Mammary epithelial cell (primary cell): ENCODE measurements at regions of chr3 and their contacts with region 1.

Region 1: GRCh38 chr3:58008140-58009025 is at the start of gene FLNB:
- DNase-seq: peak; percentile 66
- H3K4me3 ChIP-seq: peak within 1 kb of the TSS; percentile 66 to 81 (median 77)
- H3K27ac ChIP-seq: peak within 1 kb of the TSS; percentile 51
- H3K4me1 ChIP-seq: peaks cover 50% of the 10 kb centered on the region
- H3K27me3 ChIP-seq: no peaks in the 10 kb centered on the region
- CTCF ChIP-seq: peak; percentile 38 to 80
- total RNA-seq, gene FLNB: 930 to 1,038 TPM

Region 2: GRCh38 chr3:57864853-57865252 is 143.5 kb before region 1 on chr3:
- CTCF ChIA-PET with region 1: no interaction called
- dilution Hi-C with region 1: no loop called
- in situ Hi-C with region 1: no loop called
- intact Hi-C with region 1: loop called (anchors 2 kb)
- DNase-seq: no peak
- H3K4me3 ChIP-seq: no peak overlapping the region
- H3K27ac ChIP-seq: no peak overlapping the region
- H3K4me1 ChIP-seq: no peaks in the 10 kb centered on the region
- H3K27me3 ChIP-seq: no peaks in the 10 kb centered on the region
- CTCF ChIP-seq: peak; percentile 27 to 29

Region 3: GRCh38 chr3:57961828-57962447 is 46.4 kb before region 1 on chr3:
- CTCF ChIA-PET with region 1: no interaction called
- dilution Hi-C with region 1: no loop called
- in situ Hi-C with region 1: no loop called
- intact Hi-C with region 1: loop called (anchors 1 kb)
- DNase-seq: peak; percentile 64
- H3K4me3 ChIP-seq: no peak overlapping the region
- H3K27ac ChIP-seq: no peak overlapping the region
- H3K4me1 ChIP-seq: peaks cover 32% of the 10 kb centered on the region
- H3K27me3 ChIP-seq: no peaks in the 10 kb centered on the region
- CTCF ChIP-seq: peak; percentile 62 to 70

Region 4: DNA sequence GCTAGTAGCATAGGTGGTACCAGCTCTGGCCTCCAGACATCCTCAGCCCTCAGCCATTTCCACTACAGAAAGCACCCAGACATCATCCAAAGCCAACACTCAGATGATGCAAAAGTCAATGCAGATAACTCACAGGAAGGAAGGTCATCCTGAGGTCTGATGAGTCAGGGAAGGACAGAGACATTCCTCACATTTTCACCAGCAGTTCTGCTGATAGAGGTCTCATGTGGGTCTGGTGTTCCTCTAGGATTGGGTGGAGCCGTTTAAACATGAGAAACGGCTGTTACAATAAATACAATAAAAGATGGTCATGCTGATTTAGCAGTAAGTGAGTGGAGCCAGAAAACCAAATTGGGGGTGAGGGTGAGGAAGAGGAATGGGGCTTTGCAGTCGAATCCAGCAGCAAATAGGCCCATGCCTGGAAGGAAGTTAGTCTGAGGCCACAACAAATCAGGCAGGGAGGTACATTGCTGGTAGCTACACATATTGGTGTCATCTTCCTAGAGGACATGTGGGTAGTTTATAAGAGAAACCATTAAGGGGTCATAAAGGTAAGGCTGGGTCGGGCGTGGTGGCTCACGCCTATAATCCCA is 33.5 kb before region 1 on chr3:
- CTCF ChIA-PET with region 1: no interaction called
- dilution Hi-C with region 1: no loop called
- in situ Hi-C with region 1: no loop called
- intact Hi-C with region 1: loop called (anchors 1 kb)
- DNase-seq: peak; percentile 91
- H3K4me3 ChIP-seq: no peak overlapping the region
- H3K27ac ChIP-seq: peak overlapping the region; percentile 87
- H3K4me1 ChIP-seq: peaks cover 81% of the 10 kb centered on the region
- H3K27me3 ChIP-seq: no peaks in the 10 kb centered on the region
- CTCF ChIP-seq: no peak

Region 5: DNA sequence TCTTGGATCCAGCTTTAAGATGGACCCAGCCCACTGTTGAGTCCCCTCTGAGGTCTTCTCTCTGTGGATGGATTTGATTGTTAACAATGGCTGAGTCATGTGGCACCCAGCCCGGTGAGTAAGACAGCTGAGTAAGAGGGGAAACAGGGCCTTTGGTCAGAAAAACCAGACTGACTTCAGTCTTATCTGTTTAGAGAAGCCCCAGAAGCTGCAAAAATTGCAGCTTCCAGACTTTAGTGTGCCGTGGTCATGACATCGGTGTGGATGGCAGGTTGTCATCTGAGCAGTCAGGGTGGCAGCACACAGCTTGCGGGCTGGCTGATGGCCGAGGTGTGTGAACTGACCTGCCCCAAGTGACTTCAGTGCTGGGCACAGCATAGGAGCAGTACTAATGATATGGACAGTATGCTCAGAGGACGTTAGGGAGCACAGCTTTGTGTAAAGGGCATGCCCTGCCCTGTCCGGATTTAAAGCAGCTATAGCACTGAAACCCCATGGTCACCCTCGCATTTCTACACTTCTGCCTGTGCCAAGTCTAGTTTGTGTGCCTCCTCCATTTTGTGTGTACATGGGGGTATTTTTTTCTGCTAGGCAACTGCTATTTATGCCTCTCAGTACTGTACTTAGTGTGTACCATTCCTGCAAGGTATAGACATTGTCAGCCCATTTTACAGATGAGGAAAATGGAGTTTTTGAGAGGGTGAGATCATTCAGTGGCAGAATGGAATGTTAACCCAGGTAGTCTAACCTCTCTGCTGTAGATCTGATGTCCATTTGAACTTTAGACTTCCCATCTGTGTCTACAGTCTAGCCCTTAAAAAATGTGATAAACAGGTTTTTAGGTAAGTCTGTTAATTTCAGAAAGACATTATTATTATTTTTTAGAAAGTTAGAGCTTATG is 44.2 kb after region 1 on chr3:
- CTCF ChIA-PET with region 1: no interaction called
- dilution Hi-C with region 1: no loop called
- in situ Hi-C with region 1: no loop called
- intact Hi-C with region 1: loop called (anchors 1 kb)
- DNase-seq: peak; percentile 94
- H3K4me3 ChIP-seq: peak overlapping the region in 1 of 3 experiments; percentile 25
- H3K27ac ChIP-seq: peak overlapping the region; percentile 89
- H3K4me1 ChIP-seq: peaks cover 77% of the 10 kb centered on the region
- H3K27me3 ChIP-seq: no peaks in the 10 kb centered on the region
- CTCF ChIP-seq: no peak

Region 6: GRCh38 chr3:58101499-58102389 is 93.4 kb after region 1 on chr3:
- CTCF ChIA-PET with region 1: no interaction called
- dilution Hi-C with region 1: no loop called
- in situ Hi-C with region 1: no loop called
- intact Hi-C with region 1: loop called (anchors 2 kb)
- DNase-seq: no peak
- H3K4me3 ChIP-seq: no peak overlapping the region
- H3K27ac ChIP-seq: peak overlapping the region; percentile 62
- H3K4me1 ChIP-seq: peaks cover 34% of the 10 kb centered on the region
- H3K27me3 ChIP-seq: no peaks in the 10 kb centered on the region
- CTCF ChIP-seq: no peak